ENCODE measurements at regions of chr2 and their contacts with region 1.

Region 1: GRCh38 chr2:173027181-173028128 is 48.2 kb upstream of the MAP3K20 start:
- DNase-seq: peak; percentile 76 to 91 (median 82)
- ATAC-seq: peak; percentile 90
- H3K4me3 ChIP-seq: no peak overlapping the region
- H3K27ac ChIP-seq: no peak overlapping the region
- H3K4me1 ChIP-seq: no peaks in the 10 kb centered on the region
- H3K27me3 ChIP-seq: peaks cover 39 to 42% of the 10 kb centered on the region in 2 experiments
- CTCF ChIP-seq: peak; percentile 83 to 97 (median 95)
- EP300 ChIP-seq: no peak; the same call in 1 of the 2 replicates
- POLR2A ChIP-seq: no peak
- RAD21 ChIP-seq: peak; percentile 95 to 97

Region 2: DNA sequence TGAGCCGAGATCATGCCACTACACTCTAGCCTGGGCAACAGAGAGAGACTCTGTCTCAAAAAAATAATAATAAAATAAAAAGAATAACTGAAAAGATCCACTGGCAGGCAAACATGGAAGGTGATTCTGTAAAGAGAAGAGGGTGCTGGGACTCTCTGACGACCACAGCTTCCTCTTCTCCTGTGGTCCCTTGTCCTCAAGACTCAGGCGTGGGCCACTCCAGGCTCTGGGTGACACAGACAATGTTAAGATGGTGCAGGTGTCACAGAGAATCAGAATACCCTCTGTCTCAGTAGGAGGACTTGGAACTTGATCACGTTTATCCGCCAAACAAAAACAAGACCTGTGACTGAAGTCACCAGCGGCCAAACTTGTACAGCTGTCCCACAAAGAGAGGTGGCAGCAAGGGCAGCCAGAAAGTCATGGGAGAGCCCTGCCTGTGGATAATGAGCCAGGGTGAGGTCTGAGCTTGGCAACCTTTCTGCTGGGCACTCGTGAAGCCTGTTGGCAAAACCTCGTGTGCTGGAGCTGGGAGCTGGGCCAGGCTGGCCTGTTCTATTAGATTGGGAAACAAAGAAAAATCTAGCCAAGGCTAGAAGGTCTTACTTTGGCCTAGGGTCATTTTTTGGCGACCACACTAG is 676.5 kb before region 1 on chr2:
- CTCF ChIA-PET with region 1: no interaction called
- POLR2A ChIA-PET with region 1: no interaction called
- in situ Hi-C with region 1: no loop called
- intact Hi-C with region 1: no loop called
- DNase-seq: no peak
- ATAC-seq: no peak
- H3K4me3 ChIP-seq: no peak overlapping the region
- H3K27ac ChIP-seq: no peak overlapping the region
- H3K4me1 ChIP-seq: no peaks in the 10 kb centered on the region
- H3K27me3 ChIP-seq: peaks cover 0 to 5% of the 10 kb centered on the region in 2 experiments; a peak in 3 of 5 replicates
- CTCF ChIP-seq: no peak
- EP300 ChIP-seq: no peak
- POLR2A ChIP-seq: no peak
- RAD21 ChIP-seq: no peak

Region 3: GRCh38 chr2:172806493-172806892 is 221.0 kb before region 1 on chr2:
- CTCF ChIA-PET with region 1: no interaction called
- POLR2A ChIA-PET with region 1: no interaction called
- in situ Hi-C with region 1: no loop called
- intact Hi-C with region 1: loop called (anchors 2 kb)
- DNase-seq: peak; percentile 17 to 38 (median 26)
- ATAC-seq: peak; percentile 51
- H3K4me3 ChIP-seq: no peak overlapping the region
- H3K27ac ChIP-seq: no peak overlapping the region
- H3K4me1 ChIP-seq: no peaks in the 10 kb centered on the region
- H3K27me3 ChIP-seq: no peaks in the 10 kb centered on the region
- CTCF ChIP-seq: peak; percentile 66 to 88 (median 80)
- EP300 ChIP-seq: no peak
- POLR2A ChIP-seq: no peak
- RAD21 ChIP-seq: peak; percentile 82 to 92

Region 4: GRCh38 chr2:172962824-172963223 is 64.6 kb before region 1 on chr2:
- CTCF ChIA-PET with region 1: no interaction called
- POLR2A ChIA-PET with region 1: no interaction called
- in situ Hi-C with region 1: no loop called
- intact Hi-C with region 1: no loop called
- DNase-seq: no peak
- ATAC-seq: no peak
- H3K4me3 ChIP-seq: no peak overlapping the region
- H3K27ac ChIP-seq: no peak overlapping the region
- H3K4me1 ChIP-seq: no peaks in the 10 kb centered on the region
- H3K27me3 ChIP-seq: peaks cover 12 to 22% of the 10 kb centered on the region in 2 experiments
- CTCF ChIP-seq: no peak
- EP300 ChIP-seq: no peak
- POLR2A ChIP-seq: no peak
- RAD21 ChIP-seq: no peak

Region 5: DNA sequence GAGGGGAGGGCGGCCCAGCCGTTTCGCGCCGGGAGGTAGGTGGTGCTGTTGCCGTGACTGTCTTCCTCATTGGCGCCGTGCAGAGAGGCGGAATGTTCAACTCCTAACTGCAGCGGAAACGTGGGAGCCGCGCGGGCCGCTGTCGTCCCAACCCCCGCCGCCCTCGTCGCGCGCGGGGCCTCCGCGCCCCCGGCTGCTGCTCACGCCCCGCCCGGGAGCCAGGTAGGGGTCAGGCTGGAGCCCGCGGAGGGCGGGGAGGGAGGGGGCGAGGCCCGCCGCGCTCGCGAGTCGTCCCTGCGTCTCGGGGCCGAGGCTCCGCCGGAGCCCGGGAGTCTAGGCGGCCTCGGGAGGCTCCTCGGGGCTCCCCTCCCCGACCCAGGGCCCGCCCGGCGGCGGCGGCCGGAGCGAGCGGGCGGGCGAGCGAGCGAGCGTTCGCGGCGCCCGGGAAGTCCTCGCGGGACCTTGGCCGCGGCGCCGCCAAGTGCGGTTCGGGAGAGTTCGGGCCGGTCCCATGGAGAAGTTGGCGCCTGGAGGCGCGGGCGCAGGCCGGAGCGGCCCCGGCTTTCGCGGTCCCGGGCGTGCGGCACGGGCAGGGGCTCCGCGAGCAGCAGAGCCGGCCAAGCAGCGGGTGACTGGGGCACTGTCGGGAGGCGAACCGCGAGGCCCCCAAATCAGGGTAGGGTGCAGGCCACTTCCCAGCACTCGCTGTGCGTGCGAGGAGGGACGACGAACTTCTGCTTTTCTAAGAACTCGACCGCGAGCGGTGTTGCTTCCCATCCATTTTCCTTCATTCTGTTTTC is 48.5 kb after region 1 on chr2 and contains the start of gene MAP3K20:
- CTCF ChIA-PET with region 1: interaction called, 10 read pairs
- POLR2A ChIA-PET with region 1: interaction called, 3 read pairs
- in situ Hi-C with region 1: no loop called
- intact Hi-C with region 1: loop called (anchors 2 kb)
- DNase-seq: peak; percentile 72 to 87 (median 86)
- ATAC-seq: peak; percentile 80
- H3K4me3 ChIP-seq: peak within 1 kb of the TSS; percentile 66
- H3K27ac ChIP-seq: peak within 1 kb of the TSS; percentile 78
- H3K4me1 ChIP-seq: peaks cover 17% of the 10 kb centered on the region in 2 experiments; a peak in 4 of 5 replicates
- H3K27me3 ChIP-seq: peaks cover 0 to 1% of the 10 kb centered on the region in 2 experiments; a peak in 1 of 5 replicates
- CTCF ChIP-seq: peak; percentile 42 to 64 (median 58); a peak in 5 of 6 replicates
- EP300 ChIP-seq: no peak
- POLR2A ChIP-seq: peak; percentile 59; the same call in 1 of the 2 replicates
- RAD21 ChIP-seq: peak; percentile 23 to 58; a peak in 3 of 4 replicates
- polyA plus RNA-seq, gene MAP3K20: 9.8 to 9.9 TPM

Region 6: DNA sequence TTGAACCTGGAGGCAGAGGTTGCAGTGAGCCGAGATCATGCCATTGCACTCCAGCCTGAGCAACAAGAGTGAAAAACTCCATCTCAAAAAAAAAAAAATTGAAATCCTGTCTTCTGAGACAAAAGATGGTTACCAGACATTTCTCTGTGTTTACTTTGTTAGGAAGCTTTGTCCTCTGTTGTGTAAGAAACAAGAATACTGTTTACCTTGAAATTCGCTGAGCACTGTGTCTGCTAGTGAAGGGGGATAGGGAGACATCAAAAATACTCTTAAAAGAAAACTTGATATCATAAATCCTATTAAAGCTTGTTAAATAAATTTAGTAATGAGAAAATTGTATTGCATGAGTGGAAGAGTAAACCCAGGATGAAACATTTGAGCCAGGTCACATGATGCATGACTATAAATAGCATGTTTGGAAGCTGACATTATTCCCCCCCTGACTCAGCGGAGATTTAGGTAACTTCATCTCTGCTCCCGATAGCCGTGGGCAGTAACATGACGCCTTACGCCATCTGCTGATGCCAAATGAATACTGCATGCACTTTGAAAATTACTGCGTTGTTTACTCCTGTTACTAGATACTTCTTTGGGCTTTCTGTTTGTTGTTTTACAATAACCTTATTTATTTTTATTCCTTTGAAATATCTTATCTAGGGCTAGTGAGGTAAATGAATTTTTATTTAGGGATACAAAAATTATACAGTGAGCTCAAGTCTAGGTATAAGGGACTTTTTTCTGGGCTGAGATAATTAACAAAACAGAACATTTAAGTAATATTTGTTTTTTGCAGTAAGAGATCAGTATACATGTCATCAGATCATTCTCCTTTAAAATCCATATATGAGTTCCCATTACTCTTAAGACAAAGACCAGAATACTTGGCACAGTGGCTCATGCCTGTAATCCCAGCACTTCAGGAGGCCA is 183.1 kb after region 1 on chr2:
- CTCF ChIA-PET with region 1: interaction called, 79 read pairs
- POLR2A ChIA-PET with region 1: interaction called, 3 read pairs
- in situ Hi-C with region 1: loop called (anchors 5 kb)
- intact Hi-C with region 1: loop called (anchors 1 kb)
- DNase-seq: peak; percentile 70 to 87 (median 78)
- ATAC-seq: peak; percentile 95
- H3K4me3 ChIP-seq: no peak overlapping the region
- H3K27ac ChIP-seq: no peak overlapping the region
- H3K4me1 ChIP-seq: no peaks in the 10 kb centered on the region
- H3K27me3 ChIP-seq: no peaks in the 10 kb centered on the region
- CTCF ChIP-seq: peak; percentile 91 to 98 (median 91)
- EP300 ChIP-seq: peak; percentile 42; the same call in 1 of the 2 replicates
- POLR2A ChIP-seq: no peak
- RAD21 ChIP-seq: peak; percentile 97 to 98

Region 7: GRCh38 chr2:173402405-173402974 is 375.0 kb after region 1 on chr2:
- CTCF ChIA-PET with region 1: interaction called, 3 read pairs
- POLR2A ChIA-PET with region 1: interaction called, 3 read pairs
- in situ Hi-C with region 1: no loop called
- intact Hi-C with region 1: loop called (anchors 2 kb)
- DNase-seq: peak; percentile 71 to 88 (median 80)
- ATAC-seq: peak; percentile 98
- H3K4me3 ChIP-seq: no peak overlapping the region
- H3K27ac ChIP-seq: no peak overlapping the region
- H3K4me1 ChIP-seq: no peaks in the 10 kb centered on the region
- H3K27me3 ChIP-seq: peaks cover 29 to 40% of the 10 kb centered on the region in 2 experiments
- CTCF ChIP-seq: peak; percentile 93 to 96 (median 94)
- EP300 ChIP-seq: no peak
- POLR2A ChIP-seq: no peak
- RAD21 ChIP-seq: peak; percentile 94 to 98

Region 8: DNA sequence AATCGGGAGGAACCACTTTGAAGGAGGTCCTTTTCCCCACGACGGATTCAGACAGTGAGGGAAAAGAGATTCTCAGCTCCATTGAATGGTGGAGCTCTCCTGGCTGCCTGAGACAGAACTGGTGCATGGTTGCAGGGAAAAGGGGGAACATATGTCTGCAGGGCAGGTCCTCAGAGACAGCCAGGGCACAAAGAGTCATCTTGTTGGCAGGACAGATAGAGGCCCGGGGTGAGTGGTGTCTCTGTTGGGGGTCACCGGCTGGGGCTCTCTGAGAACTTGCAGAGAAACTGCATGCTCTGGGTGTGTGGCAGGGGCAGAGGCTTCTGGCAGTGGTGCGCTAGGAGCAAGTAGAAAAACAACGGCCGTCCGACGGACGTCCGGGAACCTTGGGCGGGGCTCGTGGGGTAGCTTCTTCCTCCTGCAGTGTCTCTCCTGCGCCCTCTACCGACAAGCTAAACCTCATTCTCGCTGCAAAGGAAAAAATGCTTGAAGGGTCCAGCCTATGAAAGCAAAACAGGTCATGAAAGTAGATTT is 421.6 kb after region 1 on chr2:
- CTCF ChIA-PET with region 1: interaction called, 11 read pairs
- POLR2A ChIA-PET with region 1: no interaction called
- in situ Hi-C with region 1: no loop called
- intact Hi-C with region 1: loop called (anchors 5 kb)
- DNase-seq: peak; percentile 65 to 91 (median 73)
- ATAC-seq: peak; percentile 99
- H3K4me3 ChIP-seq: no peak overlapping the region
- H3K27ac ChIP-seq: no peak overlapping the region
- H3K4me1 ChIP-seq: no peaks in the 10 kb centered on the region
- H3K27me3 ChIP-seq: peaks cover 12 to 23% of the 10 kb centered on the region in 2 experiments; a peak in 4 of 5 replicates
- CTCF ChIP-seq: peak; percentile 87 to 92 (median 91)
- EP300 ChIP-seq: no peak
- POLR2A ChIP-seq: no peak
- RAD21 ChIP-seq: peak; percentile 60 to 83

Region 9: GRCh38 chr2:173472112-173472511 is 444.7 kb after region 1 on chr2:
- CTCF ChIA-PET with region 1: no interaction called
- POLR2A ChIA-PET with region 1: no interaction called
- in situ Hi-C with region 1: no loop called
- intact Hi-C with region 1: no loop called
- DNase-seq: no peak
- ATAC-seq: no peak
- H3K4me3 ChIP-seq: no peak overlapping the region
- H3K27ac ChIP-seq: no peak overlapping the region
- H3K4me1 ChIP-seq: no peaks in the 10 kb centered on the region
- H3K27me3 ChIP-seq: peaks cover 4% of the 10 kb centered on the region in 2 experiments; a peak in 4 of 5 replicates
- CTCF ChIP-seq: no peak
- EP300 ChIP-seq: no peak
- POLR2A ChIP-seq: no peak
- RAD21 ChIP-seq: no peak